ENCODE measurements at regions of chr20 and their contacts with region 1.

Region 1: DNA sequence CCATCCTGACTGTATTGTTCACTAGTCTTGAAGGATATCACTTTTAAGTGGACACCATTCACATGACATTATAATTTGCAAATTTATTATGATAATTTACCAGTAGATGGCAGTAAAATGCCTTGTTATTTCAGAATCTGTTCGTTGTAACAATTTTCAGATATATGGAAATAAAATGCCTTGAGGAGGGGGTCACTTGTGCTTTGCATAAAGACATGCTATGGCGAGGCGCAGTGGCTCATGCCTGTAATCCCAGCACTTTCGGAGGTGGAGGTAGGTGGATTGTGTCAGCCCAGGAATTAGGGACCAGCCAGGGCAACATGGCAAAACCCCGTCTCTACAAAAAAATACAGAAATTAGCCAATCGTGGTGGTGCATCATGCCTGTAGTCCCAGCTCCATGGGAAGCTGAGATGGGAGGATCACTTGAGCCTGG is 9.0 kb upstream of the NCOA6 start:
- DNase-seq: peak in 4 of 5 donors; percentile 40 to 56 (median 47)
- H3K4me3 ChIP-seq: no peak overlapping the region
- H3K4me3 Mint-ChIP-seq: no peak overlapping the region
- H3K27ac ChIP-seq: no peak overlapping the region
- H3K27ac Mint-ChIP-seq: no peak overlapping the region
- H3K4me1 ChIP-seq: no peaks in the 10 kb centered on the region
- H3K4me1 Mint-ChIP-seq: peaks cover 0 to 6% (median 2%) of the 10 kb centered on the region in 4 donors
- H3K27me3 ChIP-seq: no peaks in the 10 kb centered on the region
- H3K27me3 Mint-ChIP-seq: peaks cover 8 to 12% of the 10 kb centered on the region in 2 donors

Region 2: DNA sequence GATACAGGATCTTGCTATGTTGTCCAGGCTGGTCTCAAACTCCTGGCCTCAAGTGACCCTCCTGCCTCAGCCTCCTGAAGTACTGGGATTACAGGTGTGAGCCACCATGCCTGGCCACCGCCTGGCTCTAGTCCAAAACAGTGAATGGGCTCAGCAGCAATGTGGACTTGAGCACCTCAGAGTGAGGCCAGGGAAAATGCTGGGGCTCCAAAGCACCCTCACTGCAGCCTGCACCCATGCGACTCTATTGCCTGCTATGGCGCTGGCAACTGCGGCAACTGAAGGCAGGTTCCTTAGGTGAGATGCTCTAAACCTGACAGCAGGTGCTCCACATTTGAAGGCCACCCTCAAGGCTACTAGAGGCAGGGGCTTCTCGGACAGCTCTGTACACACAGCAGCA is 249.5 kb before region 1 on chr20:
- CTCF ChIA-PET with region 1: no interaction called
- POLR2A ChIA-PET with region 1: no interaction called
- intact Hi-C with region 1: no loop called
- DNase-seq: no peak
- H3K4me3 ChIP-seq: no peak overlapping the region
- H3K4me3 Mint-ChIP-seq: no peak overlapping the region
- H3K27ac ChIP-seq: no peak overlapping the region
- H3K27ac Mint-ChIP-seq: no peak overlapping the region
- H3K4me1 ChIP-seq: peaks cover 21% of the 10 kb centered on the region
- H3K4me1 Mint-ChIP-seq: peaks cover 13 to 23% (median 20%) of the 10 kb centered on the region in 4 donors
- H3K27me3 ChIP-seq: no peaks in the 10 kb centered on the region
- H3K27me3 Mint-ChIP-seq: no peaks in the 10 kb centered on the region

Region 3: DNA sequence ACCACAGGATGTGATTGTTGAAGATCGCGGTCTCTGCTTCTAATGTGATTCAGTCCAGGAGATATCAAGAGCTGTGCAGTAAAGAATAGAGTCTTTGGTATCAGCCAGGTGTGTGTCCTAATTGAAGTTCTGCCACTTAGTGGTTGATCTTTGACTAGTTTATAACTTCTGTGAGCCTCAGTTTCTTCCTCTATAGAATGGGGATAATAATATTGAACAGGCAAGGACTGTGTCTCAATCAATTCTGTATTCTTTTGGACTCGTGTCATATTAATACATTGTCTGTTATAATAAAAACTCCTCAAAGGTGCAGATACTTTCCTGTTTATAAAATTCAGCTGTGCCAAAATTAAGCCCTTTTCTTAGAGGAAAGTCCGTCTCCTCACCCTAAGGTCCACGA is 14.1 kb after region 1 on chr20:
- CTCF ChIA-PET with region 1: interaction called, 11 read pairs
- POLR2A ChIA-PET with region 1: no interaction called
- intact Hi-C with region 1: no loop called
- DNase-seq: no peak
- H3K4me3 ChIP-seq: no peak overlapping the region
- H3K4me3 Mint-ChIP-seq: no peak overlapping the region
- H3K27ac ChIP-seq: no peak overlapping the region
- H3K27ac Mint-ChIP-seq: no peak overlapping the region
- H3K4me1 ChIP-seq: no peaks in the 10 kb centered on the region
- H3K4me1 Mint-ChIP-seq: no peaks in the 10 kb centered on the region
- H3K27me3 ChIP-seq: no peaks in the 10 kb centered on the region
- H3K27me3 Mint-ChIP-seq: no peaks in the 10 kb centered on the region

Region 4: GRCh38 chr20:34955232-34956040 is 121.0 kb after region 1 on chr20 and contains the starts of genes GSS and MYH7B:
- CTCF ChIA-PET with region 1: interaction called, 7 read pairs
- POLR2A ChIA-PET with region 1: no interaction called
- intact Hi-C with region 1: loop called (anchors 1 kb)
- DNase-seq: peak; percentile 92 to 97 (median 94)
- H3K4me3 ChIP-seq: peak within 1 kb of the TSS; percentile 45 to 88
- H3K4me3 Mint-ChIP-seq: peak within 1 kb of the TSS; percentile 93 to 100 (median 97)
- H3K27ac ChIP-seq: peak within 1 kb of the TSS; percentile 71
- H3K27ac Mint-ChIP-seq: peak within 1 kb of the TSS; percentile 93 to 98 (median 98)
- H3K4me1 ChIP-seq: peaks cover 13% of the 10 kb centered on the region
- H3K4me1 Mint-ChIP-seq: peaks cover 19 to 28% (median 21%) of the 10 kb centered on the region in 4 donors
- H3K27me3 ChIP-seq: no peaks in the 10 kb centered on the region
- H3K27me3 Mint-ChIP-seq: no peaks in the 10 kb centered on the region
- total RNA-seq, gene GSS: 41.0 to 43.3 TPM
- total RNA-seq, gene MYH7B: 0.39 to 0.47 TPM

Region 5: DNA sequence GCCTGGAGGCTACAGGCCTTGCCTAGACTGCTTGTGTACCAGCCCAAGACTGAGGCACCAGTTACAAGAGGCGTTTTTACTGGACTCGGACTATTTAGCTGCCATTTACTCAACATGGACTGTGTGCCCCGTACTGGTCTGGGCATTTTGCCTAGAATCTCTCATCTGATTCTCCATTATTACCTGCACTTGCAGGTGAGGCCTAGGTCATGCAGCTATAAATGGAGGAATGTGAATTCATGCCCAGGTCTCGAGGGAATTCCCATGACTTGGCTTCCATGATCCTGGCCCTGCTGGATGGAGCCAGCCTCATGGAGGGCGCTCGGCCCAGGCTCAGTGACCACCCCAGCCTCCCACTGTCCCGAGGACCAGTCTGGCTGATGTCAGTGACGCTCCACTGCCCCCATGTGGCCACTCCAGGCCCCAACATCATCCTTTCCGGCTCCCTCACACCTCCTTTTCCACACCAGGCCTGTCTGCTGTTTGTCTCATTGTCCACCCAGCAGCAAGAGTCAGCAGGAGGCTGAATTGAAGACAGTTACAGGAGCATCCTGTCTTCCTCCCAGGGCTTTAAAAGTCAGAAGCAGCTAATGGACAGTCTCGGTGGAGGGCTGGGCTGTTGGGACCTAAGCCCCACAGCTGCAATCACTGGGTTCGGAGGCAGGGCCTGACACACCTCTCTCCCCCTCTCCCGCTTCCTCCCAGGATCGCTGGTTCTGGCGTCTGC is 434.7 kb after region 1 on chr20:
- CTCF ChIA-PET with region 1: interaction called, 3 read pairs
- POLR2A ChIA-PET with region 1: no interaction called
- intact Hi-C with region 1: loop called (anchors 1 kb)
- DNase-seq: peak in 4 of 5 donors; percentile 28 to 44 (median 37)
- H3K4me3 ChIP-seq: no peak overlapping the region
- H3K4me3 Mint-ChIP-seq: no peak overlapping the region
- H3K27ac ChIP-seq: no peak overlapping the region
- H3K27ac Mint-ChIP-seq: peak overlapping the region in 2 of 7 donors; percentile 50 to 70
- H3K4me1 ChIP-seq: no peaks in the 10 kb centered on the region
- H3K4me1 Mint-ChIP-seq: peaks cover 6 to 14% (median 10%) of the 10 kb centered on the region in 4 donors
- H3K27me3 ChIP-seq: no peaks in the 10 kb centered on the region
- H3K27me3 Mint-ChIP-seq: no peaks in the 10 kb centered on the region

Region 6: DNA sequence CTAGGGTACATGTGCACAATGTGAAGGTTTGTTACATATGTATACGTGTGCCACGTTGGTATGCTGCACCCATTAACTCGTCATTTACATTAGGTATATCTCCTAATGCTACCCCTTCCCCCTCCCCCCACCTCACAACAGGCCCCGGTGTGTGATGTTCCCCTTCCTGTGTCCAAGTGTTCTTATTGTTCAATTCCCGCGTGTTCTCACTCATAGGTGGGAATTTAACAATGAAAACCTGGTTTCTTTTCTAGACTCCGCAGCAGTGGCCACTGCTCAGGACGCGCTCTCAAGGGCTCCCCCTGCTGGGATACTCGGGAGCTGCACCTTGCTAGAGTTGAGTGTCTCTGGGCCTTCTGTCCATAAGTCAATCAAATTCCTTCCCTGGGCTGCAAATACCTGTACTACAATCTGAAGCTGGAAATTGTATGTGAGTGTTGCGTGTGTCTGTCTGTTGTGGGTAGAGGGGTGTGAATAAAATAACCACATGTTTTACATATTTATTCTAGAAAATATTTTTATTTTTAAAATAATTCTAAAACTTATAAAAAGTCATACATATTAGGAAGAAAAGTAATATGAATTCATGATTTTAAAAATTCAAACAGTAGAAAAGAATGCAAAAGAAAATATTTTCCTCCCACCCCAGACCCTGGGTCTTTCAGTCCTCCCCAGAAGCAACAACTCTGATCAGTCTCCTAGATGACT is 612.8 kb after region 1 on chr20:
- CTCF ChIA-PET with region 1: no interaction called
- POLR2A ChIA-PET with region 1: no interaction called
- intact Hi-C with region 1: loop called (anchors 2 kb)
- DNase-seq: peak; percentile 80 to 84 (median 83)
- H3K4me3 ChIP-seq: peak overlapping the region in 1 of 2 donors; percentile 44
- H3K4me3 Mint-ChIP-seq: peak overlapping the region; percentile 80 to 94 (median 87)
- H3K27ac ChIP-seq: no peak overlapping the region
- H3K27ac Mint-ChIP-seq: peak overlapping the region in 4 of 7 donors; percentile 54 to 82 (median 76)
- H3K4me1 ChIP-seq: no peaks in the 10 kb centered on the region
- H3K4me1 Mint-ChIP-seq: peaks cover 0 to 3% (median 3%) of the 10 kb centered on the region in 4 donors
- H3K27me3 ChIP-seq: no peaks in the 10 kb centered on the region
- H3K27me3 Mint-ChIP-seq: peaks cover 3% of the 10 kb centered on the region in 2 donors